ENCODE measurements at regions of chr5 and their contacts with region 1.

Region 1: GRCh38 chr5:177362610-177363507 is 5.1 kb downstream of the RGS14 start:
- DNase-seq: peak; percentile 56
- H3K4me3 Mint-ChIP-seq: peak overlapping the region; percentile 67
- H3K27ac Mint-ChIP-seq: peak overlapping the region; percentile 56
- H3K4me1 Mint-ChIP-seq: peaks cover 65% of the 10 kb centered on the region
- H3K27me3 Mint-ChIP-seq: peaks cover 2% of the 10 kb centered on the region

Region 2: DNA sequence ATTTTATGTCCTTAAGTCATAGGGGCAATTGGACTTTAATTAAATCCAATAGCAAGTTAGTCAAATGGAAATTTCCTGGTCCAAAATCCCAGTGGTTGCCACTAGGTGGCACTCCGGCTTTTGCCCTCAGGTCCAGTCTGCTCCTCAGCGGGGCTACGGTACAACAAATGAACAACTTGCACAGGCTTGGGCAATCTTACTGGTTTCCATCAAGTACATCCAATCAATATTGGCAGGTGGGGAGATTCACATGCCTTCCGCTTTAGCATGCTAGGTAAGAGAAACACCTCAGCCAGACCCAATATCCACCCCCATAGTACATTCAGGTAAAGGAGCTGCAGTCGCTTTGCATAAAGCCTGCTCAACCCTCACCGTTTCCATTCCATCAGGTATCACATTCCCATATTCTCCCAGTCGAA is 44.9 kb before region 1 on chr5:
- intact Hi-C with region 1: no loop called
- DNase-seq: peak; percentile 61
- H3K4me3 Mint-ChIP-seq: no peak overlapping the region
- H3K27ac Mint-ChIP-seq: no peak overlapping the region
- H3K4me1 Mint-ChIP-seq: peaks cover 22% of the 10 kb centered on the region
- H3K27me3 Mint-ChIP-seq: no peaks in the 10 kb centered on the region

Region 3: DNA sequence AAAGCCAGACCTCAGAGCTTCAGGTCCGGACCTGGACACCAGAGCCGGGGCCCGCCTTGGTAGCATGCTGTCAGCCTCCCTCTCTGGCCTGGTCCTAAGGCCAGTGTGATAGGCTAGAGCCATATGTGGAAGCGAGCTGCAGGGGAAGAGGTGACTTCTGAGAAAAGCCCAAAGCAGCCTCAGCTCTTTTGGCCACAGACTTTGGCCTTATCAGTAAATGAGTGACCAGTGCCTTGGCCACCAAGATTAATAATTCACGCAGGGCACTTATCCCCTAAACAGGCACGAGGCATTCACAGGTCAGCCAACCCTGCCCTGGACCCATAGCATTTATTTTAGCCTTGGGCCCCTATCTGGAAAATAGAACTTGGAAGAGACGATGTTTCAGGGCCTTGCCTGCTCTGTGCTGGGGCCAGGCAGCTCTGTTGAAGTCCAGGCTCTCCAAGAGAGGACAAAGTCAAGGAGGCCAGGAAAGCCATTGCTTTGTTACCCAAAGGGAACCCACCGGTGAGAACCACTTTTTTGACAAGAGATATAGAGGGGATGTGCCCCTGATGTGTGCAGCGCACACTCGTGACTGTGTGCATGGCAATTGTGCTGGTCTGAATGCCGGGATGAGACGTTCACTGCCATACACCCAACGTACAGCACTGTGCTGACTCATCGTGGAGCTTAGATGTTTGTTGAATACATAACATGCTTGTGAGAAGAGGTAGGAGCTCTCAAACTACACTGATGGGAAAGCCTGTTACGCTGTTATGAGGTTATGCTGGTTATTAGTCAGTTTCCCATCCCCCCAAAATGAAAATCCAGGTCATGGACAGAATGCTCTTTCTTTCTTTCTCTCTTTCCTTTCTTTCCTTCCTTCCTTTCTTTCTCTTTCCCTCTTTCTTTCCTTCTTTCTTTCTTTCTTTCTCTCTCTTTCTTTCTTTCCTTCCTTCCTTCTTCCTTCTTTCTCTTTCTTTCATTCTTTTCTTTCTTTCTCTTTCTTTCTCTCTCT is 16.3 kb after region 1 on chr5:
- intact Hi-C with region 1: loop called (anchors 1 kb)
- DNase-seq: no peak
- H3K4me3 Mint-ChIP-seq: no peak overlapping the region
- H3K27ac Mint-ChIP-seq: peak overlapping the region; percentile 69
- H3K4me1 Mint-ChIP-seq: peaks cover 24% of the 10 kb centered on the region
- H3K27me3 Mint-ChIP-seq: peaks cover 8% of the 10 kb centered on the region